Sigmoid colon (tissue), 7 donors: ENCODE measurements at regions of chr11 and their contacts with region 1.

Region 1: DNA sequence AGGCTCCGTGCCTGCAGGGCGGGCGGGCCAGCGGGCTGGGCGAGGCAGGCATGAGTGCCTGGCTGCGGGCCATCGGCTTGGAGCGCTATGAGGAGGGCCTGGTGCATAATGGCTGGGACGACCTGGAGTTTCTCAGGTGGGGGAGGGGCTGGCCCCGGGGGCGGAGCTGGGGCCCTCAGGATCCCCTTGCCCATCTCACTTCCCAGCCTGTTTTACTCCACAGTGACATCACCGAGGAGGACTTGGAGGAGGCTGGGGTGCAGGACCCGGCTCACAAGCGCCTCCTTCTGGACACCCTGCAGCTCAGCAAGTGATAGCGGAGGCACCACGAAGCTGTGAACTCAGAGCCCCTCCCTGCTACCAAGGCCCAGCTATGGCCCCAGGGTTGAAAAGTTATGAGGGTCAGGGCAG is 5.9 kb downstream of the PHOX2A start:
- DNase-seq: peak; percentile 90
- H3K4me3 ChIP-seq: no peak overlapping the region
- H3K27ac ChIP-seq: peak overlapping the region; percentile 77 to 81 (median 79)
- H3K4me1 ChIP-seq: peaks cover 0 to 60% (median 59%) of the 10 kb centered on the region in 4 donors
- H3K27me3 ChIP-seq: peaks cover 5 to 29% (median 24%) of the 10 kb centered on the region in 3 donors
- CTCF ChIP-seq: peak; percentile 69 to 78 (median 76)
- EP300 ChIP-seq: no peak
- POLR2A ChIP-seq: no peak

Region 2: DNA sequence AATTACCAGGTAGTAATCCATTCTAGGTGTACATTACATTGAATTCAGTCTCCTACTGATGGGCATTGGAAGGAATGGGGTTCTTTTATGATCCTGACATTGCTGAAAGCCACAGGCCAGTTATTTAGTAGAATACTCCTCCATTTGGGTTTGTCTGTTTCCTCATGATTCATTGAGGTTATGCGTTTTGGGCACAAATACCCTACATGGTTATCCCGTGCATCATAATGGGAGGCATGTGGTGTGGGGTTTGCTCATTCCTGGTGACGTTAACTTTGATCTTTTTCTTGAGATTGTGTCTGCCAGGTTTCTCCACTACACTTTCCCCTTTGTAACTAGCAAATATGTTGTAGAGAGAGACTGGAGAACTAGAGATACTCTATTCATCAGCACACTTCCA is 97.0 kb before region 1 on chr11:
- intact Hi-C with region 1: no loop called
- DNase-seq: no peak
- H3K4me3 ChIP-seq: no peak overlapping the region
- H3K27ac ChIP-seq: no peak overlapping the region
- H3K4me1 ChIP-seq: no peaks in the 10 kb centered on the region
- H3K27me3 ChIP-seq: no peaks in the 10 kb centered on the region
- CTCF ChIP-seq: no peak
- EP300 ChIP-seq: no peak
- POLR2A ChIP-seq: no peak

Region 3: DNA sequence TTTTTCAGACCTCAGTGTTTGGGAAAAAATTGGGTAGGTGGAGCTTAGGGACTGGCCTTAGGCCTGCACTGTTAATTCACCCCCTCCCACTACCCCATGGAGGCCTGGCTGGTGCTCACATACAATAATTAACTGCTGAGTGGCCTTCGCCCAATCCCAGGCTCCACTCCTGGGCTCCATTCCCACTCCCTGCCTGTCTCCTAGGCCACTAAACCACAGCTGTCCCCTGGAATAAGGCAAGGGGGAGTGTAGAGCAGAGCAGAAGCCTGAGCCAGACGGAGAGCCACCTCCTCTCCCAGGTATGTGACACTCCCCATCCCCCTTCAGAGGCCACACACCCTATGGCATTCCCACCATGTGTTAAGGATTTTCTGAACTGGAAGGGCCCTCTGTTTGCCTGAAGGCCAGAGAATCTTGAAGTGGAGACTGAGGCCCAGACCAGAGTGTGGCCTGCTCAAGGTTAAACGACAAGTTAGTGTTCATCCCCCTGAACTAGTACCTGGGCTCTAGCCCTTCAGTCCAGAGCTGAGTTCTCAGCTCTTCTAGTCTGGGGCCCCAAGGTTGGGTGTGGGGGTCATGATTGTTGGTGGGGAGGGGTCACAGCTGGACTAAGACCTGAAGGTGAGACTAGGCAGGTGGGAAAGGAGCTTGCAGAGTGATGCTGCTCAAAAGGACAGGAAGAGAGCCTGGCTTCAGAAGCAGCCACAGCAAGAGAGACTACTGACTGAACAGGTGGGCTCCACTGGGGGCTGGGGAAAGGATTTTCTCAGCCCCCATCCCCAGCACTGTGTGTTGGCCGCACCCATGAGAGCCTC is 48.4 kb before region 1 on chr11:
- intact Hi-C with region 1: loop called (anchors 10 kb)
- DNase-seq: no peak
- H3K4me3 ChIP-seq: no peak overlapping the region
- H3K27ac ChIP-seq: no peak overlapping the region
- H3K4me1 ChIP-seq: no peaks in the 10 kb centered on the region
- H3K27me3 ChIP-seq: no peaks in the 10 kb centered on the region
- CTCF ChIP-seq: no peak
- EP300 ChIP-seq: no peak
- POLR2A ChIP-seq: no peak

Region 4: GRCh38 chr11:72222907-72223614 is 15.0 kb before region 1 on chr11:
- intact Hi-C with region 1: loop called (anchors 1 kb)
- DNase-seq: peak; percentile 98
- H3K4me3 ChIP-seq: peak overlapping the region; percentile 65 to 91 (median 80)
- H3K27ac ChIP-seq: peak overlapping the region; percentile 95 to 99 (median 98)
- H3K4me1 ChIP-seq: peaks cover 2 to 44% (median 39%) of the 10 kb centered on the region in 4 donors
- H3K27me3 ChIP-seq: no peaks in the 10 kb centered on the region
- CTCF ChIP-seq: peak in 2 of 4 experiments; percentile 11 to 24
- EP300 ChIP-seq: no peak
- POLR2A ChIP-seq: peak; percentile 74 to 84

Region 5: GRCh38 chr11:72413914-72414628 is 176.0 kb after region 1 on chr11:
- intact Hi-C with region 1: loop called (anchors 5 kb)
- DNase-seq: peak; percentile 92
- H3K4me3 ChIP-seq: no peak overlapping the region
- H3K27ac ChIP-seq: peak overlapping the region in 1 of 4 donors; percentile 22
- H3K4me1 ChIP-seq: peaks cover 0 to 24% (median 16%) of the 10 kb centered on the region in 4 donors
- H3K27me3 ChIP-seq: no peaks in the 10 kb centered on the region
- CTCF ChIP-seq: peak; percentile 65 to 88 (median 78)
- EP300 ChIP-seq: no peak
- POLR2A ChIP-seq: no peak

Region 6: DNA sequence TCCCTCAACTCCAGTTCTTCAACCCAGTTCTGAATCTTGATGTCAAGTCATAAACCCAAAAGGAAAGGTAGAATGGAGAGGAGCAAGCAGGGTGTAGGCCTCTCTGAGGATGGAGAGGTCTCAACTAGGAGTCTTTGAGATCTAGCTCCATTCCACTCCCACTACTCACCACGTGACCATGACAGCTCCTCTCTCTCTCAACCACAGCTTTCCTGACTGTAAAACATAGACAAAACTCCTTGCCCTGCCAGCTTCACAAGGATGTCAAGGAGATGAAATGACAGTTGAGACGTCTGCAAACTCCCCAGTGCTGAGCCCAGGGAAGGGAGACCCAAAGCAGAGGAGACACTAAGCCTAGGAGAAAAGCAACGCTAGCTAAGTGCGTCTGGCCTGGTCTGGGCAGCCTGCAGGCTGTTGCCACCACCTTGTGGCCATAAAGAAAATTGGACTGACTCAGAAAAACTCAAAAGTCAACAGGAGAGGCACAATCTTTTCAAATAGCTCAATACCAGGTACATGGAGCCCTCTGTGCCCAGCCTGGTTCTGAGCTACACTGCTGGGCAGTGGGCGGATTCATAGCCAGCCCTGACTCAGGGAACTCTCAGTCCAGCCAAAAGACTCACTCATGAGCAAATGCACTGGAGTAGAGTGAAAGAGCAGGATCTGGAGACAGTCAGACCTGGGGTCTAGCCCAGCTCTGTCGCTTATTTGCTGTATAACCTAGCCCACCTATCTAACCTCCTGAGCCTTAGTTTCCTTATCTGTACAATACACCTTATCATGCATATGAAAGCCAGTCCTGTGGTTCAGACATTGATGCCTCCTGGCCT is 192.9 kb after region 1 on chr11:
- intact Hi-C with region 1: loop called (anchors 5 kb)
- DNase-seq: no peak
- H3K4me3 ChIP-seq: no peak overlapping the region
- H3K27ac ChIP-seq: no peak overlapping the region
- H3K4me1 ChIP-seq: peaks cover 0 to 29% (median 19%) of the 10 kb centered on the region in 4 donors
- H3K27me3 ChIP-seq: no peaks in the 10 kb centered on the region
- CTCF ChIP-seq: peak; percentile 9 to 67 (median 57)
- EP300 ChIP-seq: no peak
- POLR2A ChIP-seq: no peak

Region 7: GRCh38 chr11:72625691-72626413 is 387.8 kb after region 1 on chr11:
- intact Hi-C with region 1: loop called (anchors 5 kb)
- DNase-seq: peak; percentile 90
- H3K4me3 ChIP-seq: no peak overlapping the region
- H3K27ac ChIP-seq: peak overlapping the region; percentile 85 to 92 (median 91)
- H3K4me1 ChIP-seq: peaks cover 0 to 76% (median 70%) of the 10 kb centered on the region in 4 donors
- H3K27me3 ChIP-seq: no peaks in the 10 kb centered on the region
- CTCF ChIP-seq: no peak
- EP300 ChIP-seq: peak in 2 of 4 donors; percentile 3 to 26
- POLR2A ChIP-seq: no peak